GM12878 (cell line): ENCODE measurements at regions of chr12 and their contacts with region 1.

Region 1: DNA sequence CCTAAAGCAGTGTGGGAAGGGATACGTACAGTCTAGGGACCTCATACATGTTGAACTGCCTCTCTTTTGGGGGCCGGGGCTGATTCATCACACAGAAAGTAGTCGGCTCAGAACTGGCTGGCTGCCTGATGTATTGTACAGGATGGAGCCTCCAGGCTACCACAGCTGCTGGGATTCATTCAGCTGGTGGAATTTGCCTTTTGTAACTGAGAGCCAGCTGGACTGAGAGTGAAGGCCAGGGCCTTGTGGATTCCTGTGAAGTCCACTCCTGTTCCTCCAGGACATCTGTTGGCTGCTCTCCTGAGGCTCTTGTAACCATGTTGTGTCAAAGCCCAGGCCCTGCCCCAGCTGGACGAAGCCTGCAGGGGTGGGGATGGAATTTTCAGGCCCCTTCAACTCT is 116.3 kb upstream of the PRICKLE1 start:
- DNase-seq: no peak
- ATAC-seq: no peak
- H3K4me3 ChIP-seq: no peak overlapping the region
- H3K27ac ChIP-seq: no peak overlapping the region
- H3K4me1 ChIP-seq: no peaks in the 10 kb centered on the region
- H3K27me3 ChIP-seq: 0 out of 4 replicates have a peak, but pooled peaks cover 0 to 2% of the 10 kb centered on the region in 2 experiments
- CTCF ChIP-seq: no peak
- EP300 ChIP-seq: no peak
- POLR2A ChIP-seq: no peak
- RAD21 ChIP-seq: no peak

Region 2: GRCh38 chr12:42446761-42447160 is 259.1 kb before region 1 on chr12:
- CTCF ChIA-PET with region 1: no interaction called
- POLR2A ChIA-PET with region 1: no interaction called
- RAD21 ChIA-PET with region 1: no interaction called
- SMC1A ChIA-PET with region 1: no interaction called
- in situ Hi-C with region 1: no loop called
- intact Hi-C with region 1: no loop called
- DNase-seq: no peak
- ATAC-seq: no peak
- H3K4me3 ChIP-seq: no peak overlapping the region
- H3K27ac ChIP-seq: no peak overlapping the region
- H3K4me1 ChIP-seq: no peaks in the 10 kb centered on the region
- H3K27me3 ChIP-seq: no peaks in the 10 kb centered on the region
- CTCF ChIP-seq: no peak
- EP300 ChIP-seq: no peak
- POLR2A ChIP-seq: no peak
- RAD21 ChIP-seq: no peak

Region 3: DNA sequence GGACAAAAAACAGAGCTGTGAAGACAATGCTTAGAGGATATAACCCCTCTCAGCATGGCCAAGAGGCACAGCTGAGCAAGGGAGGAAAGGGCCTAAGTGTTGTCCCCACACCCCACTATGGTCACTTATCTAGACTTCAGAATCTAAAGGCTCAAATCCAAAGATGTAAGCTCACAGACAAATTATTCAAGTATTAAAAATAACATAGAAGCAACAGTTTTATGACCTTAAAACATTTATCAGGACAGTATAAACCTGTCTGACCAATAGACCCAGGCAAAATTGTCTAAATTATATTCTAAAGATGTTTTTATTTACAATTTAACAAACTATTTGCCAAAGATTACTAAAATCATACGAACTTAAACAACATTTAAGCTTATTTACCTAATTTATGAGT is 88.2 kb before region 1 on chr12:
- CTCF ChIA-PET with region 1: no interaction called
- POLR2A ChIA-PET with region 1: no interaction called
- RAD21 ChIA-PET with region 1: no interaction called
- SMC1A ChIA-PET with region 1: no interaction called
- in situ Hi-C with region 1: loop called (anchors 25 kb)
- intact Hi-C with region 1: no loop called
- DNase-seq: no peak
- ATAC-seq: no peak
- H3K4me3 ChIP-seq: no peak overlapping the region
- H3K27ac ChIP-seq: no peak overlapping the region
- H3K4me1 ChIP-seq: no peaks in the 10 kb centered on the region
- H3K27me3 ChIP-seq: no peaks in the 10 kb centered on the region
- CTCF ChIP-seq: no peak
- EP300 ChIP-seq: no peak
- POLR2A ChIP-seq: no peak
- RAD21 ChIP-seq: no peak

Region 4: GRCh38 chr12:42689699-42690098 is 16.2 kb before region 1 on chr12:
- CTCF ChIA-PET with region 1: no interaction called
- POLR2A ChIA-PET with region 1: no interaction called
- RAD21 ChIA-PET with region 1: no interaction called
- SMC1A ChIA-PET with region 1: no interaction called
- in situ Hi-C with region 1: no loop called
- intact Hi-C with region 1: no loop called
- DNase-seq: no peak
- ATAC-seq: no peak
- H3K4me3 ChIP-seq: no peak overlapping the region
- H3K27ac ChIP-seq: no peak overlapping the region
- H3K4me1 ChIP-seq: no peaks in the 10 kb centered on the region
- H3K27me3 ChIP-seq: no peaks in the 10 kb centered on the region; a peak in 1 of 4 replicates
- CTCF ChIP-seq: no peak
- EP300 ChIP-seq: no peak
- POLR2A ChIP-seq: no peak
- RAD21 ChIP-seq: no peak